Head of caudate nucleus (tissue), 42 donors: ENCODE measurements at regions of chr4 and their contacts with region 1.

Region 1: DNA sequence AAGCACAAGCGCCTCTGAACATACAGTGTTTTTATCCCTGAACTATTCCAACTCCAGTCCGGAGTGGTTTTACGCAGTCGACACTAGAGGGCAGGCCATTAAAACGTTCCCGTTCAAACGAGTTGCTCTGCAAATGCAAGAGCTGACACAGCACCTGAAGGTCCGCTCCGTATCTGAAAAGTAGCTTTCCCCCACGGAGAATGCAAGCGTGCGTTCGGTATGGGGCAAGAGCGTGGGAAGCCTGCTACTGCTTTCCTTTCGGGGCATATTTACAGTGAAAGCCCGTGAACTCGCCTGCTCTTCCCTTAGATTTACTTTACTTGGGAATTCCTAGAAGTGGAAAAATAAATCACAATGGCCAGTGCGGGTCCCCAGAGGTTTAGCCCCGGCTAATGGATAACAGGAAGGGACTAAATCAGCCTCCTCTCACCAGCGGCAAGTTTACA is 190.8 kb downstream of the TSPAN5 start:
- DNase-seq: peak; percentile 59 to 94 (median 84)

Region 2: GRCh38 chr4:98546910-98547594 is 79.4 kb after region 1 on chr4:
- intact Hi-C with region 1: no loop called
- DNase-seq: peak in 26 of 42 donors; percentile 14 to 75 (median 40)

Region 3: DNA sequence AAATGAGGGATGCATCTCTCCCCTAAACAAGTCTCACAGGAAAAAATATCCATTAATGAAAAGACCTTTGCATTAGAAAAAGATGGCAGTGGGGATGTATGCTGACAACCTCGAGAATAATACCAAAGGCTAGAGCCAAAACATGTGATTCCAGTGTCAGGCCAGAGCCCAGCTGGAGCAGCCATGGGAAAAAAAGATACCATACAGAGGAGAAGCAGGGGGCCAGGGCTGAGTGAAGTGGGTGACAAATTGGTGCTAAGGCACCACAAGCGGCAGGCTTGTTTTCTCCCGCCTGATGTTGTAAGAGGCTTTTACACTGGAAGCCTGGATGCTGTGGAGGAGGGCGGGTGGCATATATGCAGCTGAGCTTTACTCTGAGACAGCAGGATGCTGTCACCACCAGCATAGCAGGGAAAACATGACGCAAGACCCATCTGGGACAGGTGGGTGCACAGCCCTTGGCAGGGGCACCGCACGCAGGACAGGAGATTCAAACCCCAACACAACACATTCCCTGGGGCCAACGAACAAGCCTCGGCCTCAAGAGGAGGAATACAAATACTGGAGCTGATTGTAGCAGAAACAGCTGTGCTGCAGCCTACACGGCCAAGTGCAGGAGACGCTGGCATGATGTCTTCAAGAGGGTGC is 98.8 kb after region 1 on chr4:
- intact Hi-C with region 1: loop called (anchors 5 kb)
- DNase-seq: peak; percentile 45 to 91 (median 76)

Region 4: DNA sequence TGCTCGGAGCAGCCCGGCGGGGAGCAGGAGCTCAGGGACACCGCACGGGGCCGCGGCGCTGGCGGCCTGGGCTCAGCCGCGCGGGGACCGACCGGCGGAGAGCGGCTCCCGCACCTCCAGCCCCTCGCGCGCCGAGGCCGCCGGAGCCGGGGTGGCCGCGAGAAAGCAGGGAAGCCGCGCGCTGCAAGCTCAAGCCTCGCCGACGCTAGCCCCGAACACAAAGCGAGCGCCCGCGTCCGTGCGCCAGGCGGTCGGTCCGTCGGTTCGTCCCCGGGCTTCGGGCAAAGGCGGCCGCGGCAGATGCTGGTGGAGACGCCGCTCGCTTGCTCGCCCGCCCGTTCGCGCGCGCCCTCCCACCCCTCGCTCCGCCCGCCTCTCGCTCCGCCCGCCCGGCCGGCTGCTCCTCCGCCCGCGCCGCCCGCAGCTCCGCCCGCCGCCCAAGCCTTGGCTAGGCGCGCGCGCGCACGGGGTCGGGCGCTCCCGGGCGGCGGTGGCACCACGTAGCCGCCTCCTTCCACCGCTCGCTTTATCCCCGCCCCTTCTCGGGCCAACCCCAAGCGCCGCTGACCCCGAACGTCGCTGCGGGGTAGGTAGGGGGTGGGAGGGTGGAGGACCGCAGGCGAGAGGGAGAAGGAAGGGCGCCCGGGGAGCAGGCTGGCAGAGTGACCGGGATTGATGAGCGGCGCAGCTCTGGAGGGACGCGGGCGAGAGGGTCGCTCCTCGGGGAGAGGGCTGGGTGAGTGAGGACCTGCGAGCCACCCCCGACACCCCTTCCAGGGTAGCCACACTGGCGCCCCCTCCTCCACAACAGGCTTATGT is 190.8 kb after region 1 on chr4 and contains the start of gene TSPAN5:
- intact Hi-C with region 1: loop called (anchors 5 kb)
- DNase-seq: peak; percentile 32 to 94 (median 86)